Cardiac septum (tissue), 1 donor: ENCODE measurements at regions of chr16 and their contacts with region 1.

Region 1: DNA sequence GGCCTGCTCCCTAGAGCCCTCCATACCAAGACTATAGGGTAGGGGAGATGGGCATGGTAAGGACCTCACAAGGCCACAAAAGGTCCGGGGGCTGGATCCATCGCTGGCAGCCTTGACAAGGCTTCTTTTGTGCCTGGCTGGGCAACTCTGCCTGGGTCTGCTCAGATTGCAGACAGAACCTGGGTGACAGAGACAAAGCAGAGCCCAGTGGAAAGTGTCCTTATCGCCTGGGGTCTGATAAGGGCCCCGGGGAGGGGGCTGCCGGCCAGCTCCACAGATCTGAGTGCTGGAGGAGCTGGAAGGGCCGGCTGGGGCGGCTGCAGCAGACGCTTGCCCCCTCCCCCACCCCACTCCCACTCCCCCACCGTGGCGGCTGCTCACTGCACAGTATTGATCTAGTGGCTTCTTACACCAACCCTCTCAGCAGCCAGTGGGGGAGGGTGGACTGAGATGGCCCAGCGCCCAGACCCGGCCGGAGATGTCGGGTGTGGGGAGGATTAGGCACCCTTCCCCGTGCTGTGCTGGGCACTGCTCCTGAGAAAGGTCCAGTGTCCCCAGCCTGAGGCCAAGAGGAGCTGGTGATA is 7.2 kb downstream of the MMP15 start:
- DNase-seq: peak; percentile 90

Region 2: DNA sequence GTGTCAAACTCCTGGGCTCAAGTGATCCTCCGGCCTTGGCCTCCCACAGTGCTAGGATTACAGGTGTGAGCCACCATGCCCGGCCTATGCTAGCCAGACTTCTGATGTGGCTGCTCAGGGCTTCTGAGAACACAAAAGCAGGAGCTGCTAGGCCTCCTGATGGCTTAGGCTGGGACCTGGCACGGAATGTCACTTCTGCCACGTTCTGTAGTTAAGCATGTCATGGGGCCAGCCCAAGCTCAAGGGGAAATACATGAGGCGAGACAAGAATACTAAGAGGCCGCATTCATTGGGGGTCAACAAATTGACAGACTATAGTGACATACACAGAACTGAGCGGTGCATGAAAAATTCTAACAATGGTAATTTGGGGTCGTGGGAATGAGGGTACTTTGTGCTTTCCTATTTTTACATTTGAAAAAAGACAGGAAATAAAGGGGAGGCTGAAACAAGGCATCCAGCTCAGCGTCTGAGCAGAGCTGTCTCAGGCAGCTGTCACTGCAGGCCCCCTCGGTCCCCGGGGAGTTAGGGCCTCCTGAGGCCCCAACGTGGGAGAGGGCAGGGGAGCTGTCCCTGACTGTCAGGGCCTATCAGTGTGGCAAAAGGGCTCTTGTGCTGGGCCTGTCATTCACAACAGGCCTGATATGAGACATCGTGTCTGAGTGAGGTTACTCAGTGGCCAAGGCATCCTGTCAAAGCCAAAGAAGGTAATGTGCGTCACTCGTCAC is 70.0 kb after region 1 on chr16:
- intact Hi-C with region 1: loop called (anchors 5 kb)
- DNase-seq: no peak

Region 3: DNA sequence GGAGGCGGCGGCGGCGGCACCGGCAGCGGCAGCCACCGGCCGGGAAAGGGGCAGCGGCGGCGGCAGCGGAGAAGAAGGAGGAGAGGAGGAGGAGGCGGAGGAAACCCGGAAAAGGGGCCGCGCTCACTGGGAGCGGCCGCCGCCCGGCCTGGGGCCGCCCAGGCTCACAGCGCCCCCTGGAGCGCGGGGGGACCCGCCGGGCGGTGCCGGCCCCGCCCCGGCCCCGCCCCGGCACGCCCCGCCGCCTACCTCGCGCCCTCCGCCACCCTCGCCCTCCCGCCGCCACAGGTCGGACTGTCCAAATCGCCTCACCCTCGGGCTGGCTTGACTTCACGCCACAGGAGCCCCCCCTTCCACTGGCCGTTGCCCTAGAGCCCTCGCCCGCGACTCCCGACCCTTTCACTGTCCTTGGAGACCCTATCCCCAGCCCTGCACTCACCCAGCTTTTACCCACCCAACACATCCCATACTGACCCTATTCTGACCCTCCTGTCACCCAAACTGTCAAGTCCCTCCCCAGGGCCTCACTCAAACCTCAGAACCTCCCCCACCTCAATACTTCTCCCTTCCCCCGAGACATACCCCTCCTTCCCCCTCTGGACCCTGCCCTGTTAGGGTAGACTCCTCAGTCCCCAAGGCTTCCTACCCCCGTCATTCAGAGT is 165.4 kb after region 1 on chr16 and contains the start of gene CSNK2A2:
- intact Hi-C with region 1: loop called (anchors 5 kb)
- DNase-seq: peak; percentile 77
- total RNA-seq, gene CSNK2A2: 35.8 TPM